Activated CD4-positive, alpha-beta T cell treated with anti-CD3 and anti-CD28 coated beads for 36 hours (primary cell): ENCODE measurements at regions of chr7 and their contacts with region 1.

Region 1: DNA sequence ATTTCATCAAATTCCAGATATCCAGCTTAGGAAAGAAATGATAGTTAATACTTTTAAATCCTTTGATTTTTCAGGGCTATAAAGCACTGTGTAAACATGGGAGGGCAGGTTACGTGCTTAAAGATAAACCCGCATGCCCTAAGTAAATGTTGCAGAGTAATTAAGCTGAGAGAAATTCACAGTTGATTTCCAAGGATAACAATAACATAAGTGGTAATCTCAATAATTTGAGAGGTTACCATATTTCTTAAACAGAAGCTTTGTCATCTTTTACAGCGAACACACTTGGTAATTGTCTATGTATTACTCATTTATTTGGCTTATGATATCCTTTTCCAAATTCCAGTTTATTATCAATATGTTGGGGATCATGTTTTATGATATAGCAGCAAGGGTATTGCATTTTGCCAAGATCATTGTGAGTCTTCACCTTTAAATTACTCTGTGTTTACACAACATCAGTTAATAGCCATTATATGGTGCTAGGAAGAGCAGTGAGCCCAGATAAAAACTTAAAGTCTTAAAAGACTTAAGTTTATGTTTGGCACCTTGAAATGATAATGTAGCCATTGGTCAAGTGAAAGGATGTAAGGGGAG is 15.4 kb downstream of the MGAM start:
- DNase-seq: no peak
- ATAC-seq: no peak
- H3K4me3 Mint-ChIP-seq: no peak overlapping the region
- H3K27ac Mint-ChIP-seq: no peak overlapping the region
- H3K4me1 Mint-ChIP-seq: no peaks in the 10 kb centered on the region
- H3K27me3 Mint-ChIP-seq: peaks cover 5% of the 10 kb centered on the region

Region 2: GRCh38 chr7:142030294-142030693 is 19.2 kb after region 1 on chr7:
- CTCF ChIA-PET with region 1: no interaction called
- POLR2A ChIA-PET with region 1: no interaction called
- intact Hi-C with region 1: loop called in 1 of 2 experiments (anchors 2 kb)
- DNase-seq: no peak
- ATAC-seq: no peak
- H3K4me3 Mint-ChIP-seq: no peak overlapping the region
- H3K27ac Mint-ChIP-seq: no peak overlapping the region
- H3K4me1 Mint-ChIP-seq: no peaks in the 10 kb centered on the region
- H3K27me3 Mint-ChIP-seq: peaks cover 10% of the 10 kb centered on the region

Region 3: DNA sequence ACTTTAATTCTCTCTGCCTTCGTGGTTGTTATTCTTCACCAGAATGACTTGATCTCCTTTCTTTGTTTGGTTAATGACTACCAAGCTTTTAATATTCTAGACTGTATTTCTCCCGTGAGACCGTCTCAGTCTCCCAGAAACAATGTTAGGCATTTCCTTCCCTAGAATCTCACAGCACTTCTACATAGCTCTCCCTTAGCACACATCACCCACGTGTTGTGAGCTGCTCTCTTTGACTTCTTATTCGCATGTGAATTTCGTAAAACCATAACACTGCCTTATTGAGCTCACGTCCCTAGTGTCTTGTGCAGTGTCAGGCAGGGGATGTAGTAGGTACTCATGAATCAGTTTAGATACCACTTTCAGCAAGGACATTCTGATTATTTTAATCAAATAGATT is 42.9 kb after region 1 on chr7:
- CTCF ChIA-PET with region 1: no interaction called
- POLR2A ChIA-PET with region 1: no interaction called
- intact Hi-C with region 1: no loop called
- DNase-seq: no peak
- ATAC-seq: no peak
- H3K4me3 Mint-ChIP-seq: no peak overlapping the region
- H3K27ac Mint-ChIP-seq: no peak overlapping the region
- H3K4me1 Mint-ChIP-seq: no peaks in the 10 kb centered on the region
- H3K27me3 Mint-ChIP-seq: peaks cover 5% of the 10 kb centered on the region

Region 4: DNA sequence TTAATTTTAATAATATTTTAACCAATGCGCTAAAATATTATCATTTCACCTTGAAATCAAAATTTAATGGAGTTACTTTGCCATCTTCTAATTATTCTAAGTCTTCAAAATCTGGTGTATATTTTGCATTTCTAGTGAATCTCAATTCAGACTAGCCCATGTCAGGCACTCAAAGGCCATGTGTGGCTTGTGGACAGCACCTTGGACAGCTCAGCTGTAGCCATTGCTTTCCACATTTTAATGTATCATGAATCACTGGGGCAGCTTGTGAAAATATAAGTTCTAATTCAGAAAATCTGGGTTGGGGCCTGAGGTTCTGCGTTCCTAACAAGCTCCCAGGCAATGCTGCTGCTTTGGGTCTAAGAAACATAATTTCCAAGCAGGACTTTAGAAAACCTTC is 157.7 kb after region 1 on chr7:
- CTCF ChIA-PET with region 1: no interaction called
- POLR2A ChIA-PET with region 1: no interaction called
- intact Hi-C with region 1: no loop called
- DNase-seq: no peak
- ATAC-seq: no peak
- H3K4me3 Mint-ChIP-seq: no peak overlapping the region
- H3K27ac Mint-ChIP-seq: no peak overlapping the region
- H3K4me1 Mint-ChIP-seq: no peaks in the 10 kb centered on the region
- H3K27me3 Mint-ChIP-seq: peaks cover 2% of the 10 kb centered on the region